HepG2 (cell line): ENCODE measurements at regions of chr11 and their contacts with region 1.

Region 1: GRCh38 chr11:59053387-59053786 is 32.7 kb upstream of the GLYATL1B start:
- DNase-seq: peak; percentile 37
- ATAC-seq: peak; percentile 71; the same call in 2 of the 3 replicates
- H3K4me3 ChIP-seq: no peak overlapping the region
- H3K27ac ChIP-seq: no peak overlapping the region
- H3K4me1 ChIP-seq: no peaks in the 10 kb centered on the region
- H3K27me3 ChIP-seq: no peaks in the 10 kb centered on the region
- CTCF ChIP-seq: peak; percentile 56
- EP300 ChIP-seq: no peak
- POLR2A ChIP-seq: no peak
- RAD21 ChIP-seq: no peak

Region 2: DNA sequence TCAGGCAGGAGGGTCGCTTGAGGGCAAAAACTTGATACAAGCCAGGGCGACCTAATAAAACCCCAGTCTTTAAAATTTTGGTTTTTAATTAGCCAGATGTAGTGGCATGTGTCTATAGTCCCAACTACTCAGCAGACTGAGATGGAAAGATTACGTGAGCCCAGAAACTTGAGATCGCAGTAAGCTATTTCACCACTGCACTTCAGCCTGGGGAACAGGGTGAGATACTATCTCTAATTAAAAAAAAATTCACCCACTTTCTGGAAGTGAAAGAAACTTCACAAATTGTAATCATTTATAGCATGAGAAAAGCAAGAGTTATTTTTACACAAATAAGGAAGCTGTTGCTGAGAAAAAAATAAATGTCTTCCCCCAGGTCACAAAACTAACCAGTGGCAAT is 208.0 kb before region 1 on chr11:
- CTCF ChIA-PET with region 1: no interaction called
- POLR2A ChIA-PET with region 1: no interaction called
- in situ Hi-C with region 1: no loop called
- intact Hi-C with region 1: loop called (anchors 5 kb)
- DNase-seq: no peak
- ATAC-seq: no peak
- H3K4me3 ChIP-seq: no peak overlapping the region
- H3K27ac ChIP-seq: no peak overlapping the region
- H3K4me1 ChIP-seq: no peaks in the 10 kb centered on the region
- H3K27me3 ChIP-seq: no peaks in the 10 kb centered on the region
- CTCF ChIP-seq: no peak
- EP300 ChIP-seq: no peak
- POLR2A ChIP-seq: no peak
- RAD21 ChIP-seq: no peak

Region 3: GRCh38 chr11:58900479-58901420 is 152.6 kb before region 1 on chr11:
- CTCF ChIA-PET with region 1: no interaction called
- POLR2A ChIA-PET with region 1: no interaction called
- in situ Hi-C with region 1: no loop called
- intact Hi-C with region 1: loop called (anchors 1 kb)
- DNase-seq: peak; percentile 56
- ATAC-seq: peak; percentile 96
- H3K4me3 ChIP-seq: 0 out of 6 replicates have a peak overlapping the region, but pooled peaks of 1 of the 3 experiments have one; percentile 39
- H3K27ac ChIP-seq: no peak overlapping the region
- H3K4me1 ChIP-seq: 0 out of 2 replicates have a peak, but pooled peaks cover 4% of the 10 kb centered on the region
- H3K27me3 ChIP-seq: peaks cover 1 to 3% of the 10 kb centered on the region in 2 experiments; a peak in 2 of 5 replicates
- CTCF ChIP-seq: peak; percentile 89
- EP300 ChIP-seq: no peak
- POLR2A ChIP-seq: no peak
- RAD21 ChIP-seq: peak; percentile 63; the same call in 1 of the 2 replicates

Region 4: GRCh38 chr11:58958500-58958899 is 94.9 kb before region 1 on chr11:
- CTCF ChIA-PET with region 1: no interaction called
- POLR2A ChIA-PET with region 1: no interaction called
- in situ Hi-C with region 1: no loop called
- intact Hi-C with region 1: loop called (anchors 1 kb)
- DNase-seq: peak; percentile 23
- ATAC-seq: 0 out of 3 replicates have a peak, but pooled peaks have one; percentile 41
- H3K4me3 ChIP-seq: no peak overlapping the region
- H3K27ac ChIP-seq: no peak overlapping the region
- H3K4me1 ChIP-seq: no peaks in the 10 kb centered on the region
- H3K27me3 ChIP-seq: no peaks in the 10 kb centered on the region
- CTCF ChIP-seq: peak; percentile 57
- EP300 ChIP-seq: no peak
- POLR2A ChIP-seq: no peak
- RAD21 ChIP-seq: no peak

Region 5: DNA sequence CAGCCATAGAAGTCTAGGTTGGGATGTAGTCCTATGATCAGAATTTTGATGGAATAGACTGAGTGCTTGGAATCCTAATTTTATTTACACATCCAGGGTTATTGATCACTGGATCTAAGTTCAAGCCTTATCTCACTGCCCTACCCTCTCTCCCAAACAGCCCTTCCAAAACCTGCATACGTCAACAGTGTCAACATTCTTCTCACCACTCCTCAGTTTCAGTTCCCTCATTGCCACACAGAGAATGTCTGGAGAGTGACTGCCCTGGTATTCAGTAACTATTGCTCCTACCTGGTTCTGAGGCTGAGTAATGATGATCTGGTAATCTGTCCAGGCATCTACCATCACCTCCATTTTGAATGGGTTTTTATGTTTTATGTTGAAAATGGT is 54.1 kb before region 1 on chr11:
- CTCF ChIA-PET with region 1: no interaction called
- POLR2A ChIA-PET with region 1: no interaction called
- in situ Hi-C with region 1: no loop called
- intact Hi-C with region 1: no loop called
- DNase-seq: no peak
- ATAC-seq: no peak
- H3K4me3 ChIP-seq: no peak overlapping the region
- H3K27ac ChIP-seq: no peak overlapping the region
- H3K4me1 ChIP-seq: no peaks in the 10 kb centered on the region
- H3K27me3 ChIP-seq: no peaks in the 10 kb centered on the region; a peak in 1 of 5 replicates
- CTCF ChIP-seq: no peak
- EP300 ChIP-seq: no peak
- POLR2A ChIP-seq: no peak
- RAD21 ChIP-seq: no peak

Region 6: DNA sequence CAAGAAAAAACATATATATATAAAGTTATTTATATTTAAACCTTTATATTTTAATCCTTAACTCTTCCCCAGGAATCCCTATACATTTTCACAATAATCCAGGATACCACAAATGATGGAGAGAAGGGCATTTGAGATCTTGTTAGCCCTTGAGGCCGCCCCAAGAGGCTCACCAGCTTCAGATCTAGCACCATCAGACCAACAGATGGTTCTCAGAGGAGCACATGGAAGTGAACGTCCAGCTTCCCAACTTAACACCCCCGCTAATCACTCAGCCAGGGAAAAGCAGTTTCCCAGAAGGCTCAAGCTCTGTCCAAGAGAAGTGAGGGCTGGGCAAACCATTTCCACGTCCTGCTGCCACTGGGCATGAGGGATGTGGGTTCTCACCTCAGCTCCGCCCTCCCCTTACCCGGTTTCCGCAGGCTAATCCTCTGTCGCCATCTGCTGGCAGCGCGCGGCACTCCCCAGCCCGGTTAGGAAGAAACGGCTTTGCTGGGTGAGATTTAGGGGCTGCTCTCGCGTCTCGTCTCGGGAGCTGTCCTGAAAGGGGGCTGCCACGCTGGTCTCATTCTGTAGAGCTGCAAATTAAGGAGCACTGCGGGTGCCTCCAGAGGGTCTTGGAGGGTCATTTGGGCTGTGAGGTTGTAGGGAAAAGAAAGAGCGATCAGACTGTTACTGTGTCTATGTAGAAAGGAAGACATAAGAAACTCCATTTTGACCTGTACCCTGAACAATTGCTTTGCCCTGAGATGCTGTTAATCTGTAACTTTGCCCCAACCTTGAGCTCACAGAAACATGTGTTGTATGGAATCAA is 82.5 kb after region 1 on chr11:
- CTCF ChIA-PET with region 1: interaction called, 3 read pairs
- POLR2A ChIA-PET with region 1: no interaction called
- in situ Hi-C with region 1: no loop called
- intact Hi-C with region 1: loop called (anchors 1 kb)
- DNase-seq: peak; percentile 70
- ATAC-seq: peak; percentile 100
- H3K4me3 ChIP-seq: peak overlapping the region in 2 of 3 experiments; percentile 36 to 60; a peak in 2 of 6 replicates
- H3K27ac ChIP-seq: peak overlapping the region; percentile 57
- H3K4me1 ChIP-seq: peaks cover 12% of the 10 kb centered on the region
- H3K27me3 ChIP-seq: no peaks in the 10 kb centered on the region
- CTCF ChIP-seq: peak; percentile 99
- EP300 ChIP-seq: no peak
- POLR2A ChIP-seq: no peak
- RAD21 ChIP-seq: peak; percentile 93

Region 7: GRCh38 chr11:59158206-59159068 is 105.0 kb after region 1 on chr11:
- CTCF ChIA-PET with region 1: no interaction called
- POLR2A ChIA-PET with region 1: no interaction called
- in situ Hi-C with region 1: no loop called
- intact Hi-C with region 1: loop called (anchors 1 kb)
- DNase-seq: peak; percentile 56
- ATAC-seq: peak; percentile 95
- H3K4me3 ChIP-seq: no peak overlapping the region
- H3K27ac ChIP-seq: no peak overlapping the region
- H3K4me1 ChIP-seq: no peaks in the 10 kb centered on the region
- H3K27me3 ChIP-seq: no peaks in the 10 kb centered on the region; a peak in 1 of 5 replicates
- CTCF ChIP-seq: peak; percentile 89
- EP300 ChIP-seq: no peak
- POLR2A ChIP-seq: no peak
- RAD21 ChIP-seq: peak; percentile 65